ENCODE measurements at regions of chr2 and their contacts with region 1.

Region 1: DNA sequence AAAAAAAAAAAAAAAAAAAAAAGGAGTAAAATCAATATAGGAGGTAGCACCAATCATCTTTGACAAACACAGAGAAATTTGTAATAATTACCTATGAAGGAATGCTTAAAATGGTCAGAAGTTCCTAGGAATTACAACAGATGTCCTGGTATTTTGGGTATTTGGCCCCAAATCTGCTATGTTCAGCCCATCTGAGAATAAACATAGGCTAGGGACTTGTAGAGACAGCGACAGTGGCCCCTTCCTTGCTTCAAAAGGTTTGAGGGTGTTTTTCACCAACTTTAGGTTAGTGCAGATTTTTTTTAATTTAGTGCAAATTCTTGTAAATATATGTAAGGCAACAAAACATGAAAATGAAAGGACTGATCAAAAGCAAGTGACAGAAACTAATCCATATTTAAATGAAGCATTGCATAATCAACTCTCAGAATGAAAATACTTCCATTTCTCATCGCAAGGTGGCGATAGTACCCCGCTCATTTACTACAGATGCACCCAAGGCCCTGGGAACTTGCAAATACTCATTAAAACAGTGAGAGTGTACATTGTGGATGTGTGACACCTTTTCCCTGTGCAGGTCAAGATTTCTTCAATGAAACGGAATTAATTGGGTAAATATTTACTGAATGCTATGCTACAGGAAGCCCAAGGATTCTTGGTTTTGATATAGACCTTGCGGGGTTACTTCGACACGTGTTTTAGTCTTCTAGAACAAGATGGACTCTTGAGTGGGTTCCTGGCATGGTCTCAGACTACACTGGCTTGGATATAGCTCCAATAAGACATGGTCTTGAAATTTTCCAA is 44.6 kb downstream of the FAM124B start:
- DNase-seq: peak; percentile 79
- ATAC-seq: peak; percentile 81
- H3K4me3 ChIP-seq: no peak overlapping the region
- H3K4me3 Mint-ChIP-seq: no peak overlapping the region
- H3K27ac ChIP-seq: no peak overlapping the region
- H3K27ac Mint-ChIP-seq: no peak overlapping the region
- H3K4me1 ChIP-seq: no peaks in the 10 kb centered on the region
- H3K4me1 Mint-ChIP-seq: no peaks in the 10 kb centered on the region
- H3K27me3 ChIP-seq: no peaks in the 10 kb centered on the region
- H3K27me3 Mint-ChIP-seq: peaks cover 11% of the 10 kb centered on the region
- CTCF ChIP-seq: peak; percentile 87

Region 2: GRCh38 chr2:224195925-224196571 is 161.3 kb before region 1 on chr2:
- CTCF ChIA-PET with region 1: no interaction called
- POLR2A ChIA-PET with region 1: no interaction called
- intact Hi-C with region 1: no loop called
- DNase-seq: no peak
- ATAC-seq: no peak
- H3K4me3 ChIP-seq: no peak overlapping the region
- H3K4me3 Mint-ChIP-seq: no peak overlapping the region
- H3K27ac ChIP-seq: no peak overlapping the region
- H3K27ac Mint-ChIP-seq: no peak overlapping the region
- H3K4me1 ChIP-seq: no peaks in the 10 kb centered on the region
- H3K4me1 Mint-ChIP-seq: no peaks in the 10 kb centered on the region
- H3K27me3 ChIP-seq: peaks cover 0 to 2% (median 0%) of the 10 kb centered on the region in 4 experiments
- H3K27me3 Mint-ChIP-seq: peaks cover 10% of the 10 kb centered on the region
- CTCF ChIP-seq: no peak

Region 3: DNA sequence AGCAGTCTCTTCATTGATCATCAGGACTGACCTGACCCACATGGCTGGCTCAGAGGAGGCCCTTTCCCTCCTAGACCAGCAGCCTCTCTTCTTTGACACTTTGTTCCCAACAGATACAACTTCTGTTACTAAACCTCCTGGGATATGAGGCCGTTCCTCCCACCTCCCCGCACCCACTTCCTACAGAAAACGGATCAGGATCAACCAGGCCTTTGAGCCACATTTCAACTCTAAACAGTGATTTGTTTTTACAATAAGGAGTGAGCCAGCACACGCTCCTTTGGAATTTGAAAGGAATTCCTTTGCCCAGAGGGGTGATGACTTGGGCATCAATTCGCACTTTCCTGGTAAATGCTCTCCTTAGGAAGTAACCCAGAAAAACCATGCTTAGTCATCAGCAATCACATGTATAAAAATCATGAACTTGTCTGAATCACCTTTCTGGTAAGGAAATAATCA is 135.8 kb before region 1 on chr2:
- CTCF ChIA-PET with region 1: no interaction called
- POLR2A ChIA-PET with region 1: no interaction called
- intact Hi-C with region 1: no loop called
- DNase-seq: no peak
- ATAC-seq: no peak
- H3K4me3 ChIP-seq: no peak overlapping the region
- H3K4me3 Mint-ChIP-seq: no peak overlapping the region
- H3K27ac ChIP-seq: no peak overlapping the region
- H3K27ac Mint-ChIP-seq: no peak overlapping the region
- H3K4me1 ChIP-seq: no peaks in the 10 kb centered on the region
- H3K4me1 Mint-ChIP-seq: no peaks in the 10 kb centered on the region
- H3K27me3 ChIP-seq: peaks cover 0 to 2% (median 0%) of the 10 kb centered on the region in 4 experiments
- H3K27me3 Mint-ChIP-seq: peaks cover 26% of the 10 kb centered on the region
- CTCF ChIP-seq: no peak

Region 4: GRCh38 chr2:224369028-224369632 is 11.8 kb after region 1 on chr2:
- CTCF ChIA-PET with region 1: interaction called, 17 read pairs
- POLR2A ChIA-PET with region 1: no interaction called
- intact Hi-C with region 1: no loop called
- DNase-seq: peak; percentile 58
- ATAC-seq: no peak
- H3K4me3 ChIP-seq: no peak overlapping the region
- H3K4me3 Mint-ChIP-seq: no peak overlapping the region
- H3K27ac ChIP-seq: no peak overlapping the region
- H3K27ac Mint-ChIP-seq: no peak overlapping the region
- H3K4me1 ChIP-seq: no peaks in the 10 kb centered on the region
- H3K4me1 Mint-ChIP-seq: no peaks in the 10 kb centered on the region
- H3K27me3 ChIP-seq: no peaks in the 10 kb centered on the region
- H3K27me3 Mint-ChIP-seq: no peaks in the 10 kb centered on the region
- CTCF ChIP-seq: peak; percentile 81

Region 5: DNA sequence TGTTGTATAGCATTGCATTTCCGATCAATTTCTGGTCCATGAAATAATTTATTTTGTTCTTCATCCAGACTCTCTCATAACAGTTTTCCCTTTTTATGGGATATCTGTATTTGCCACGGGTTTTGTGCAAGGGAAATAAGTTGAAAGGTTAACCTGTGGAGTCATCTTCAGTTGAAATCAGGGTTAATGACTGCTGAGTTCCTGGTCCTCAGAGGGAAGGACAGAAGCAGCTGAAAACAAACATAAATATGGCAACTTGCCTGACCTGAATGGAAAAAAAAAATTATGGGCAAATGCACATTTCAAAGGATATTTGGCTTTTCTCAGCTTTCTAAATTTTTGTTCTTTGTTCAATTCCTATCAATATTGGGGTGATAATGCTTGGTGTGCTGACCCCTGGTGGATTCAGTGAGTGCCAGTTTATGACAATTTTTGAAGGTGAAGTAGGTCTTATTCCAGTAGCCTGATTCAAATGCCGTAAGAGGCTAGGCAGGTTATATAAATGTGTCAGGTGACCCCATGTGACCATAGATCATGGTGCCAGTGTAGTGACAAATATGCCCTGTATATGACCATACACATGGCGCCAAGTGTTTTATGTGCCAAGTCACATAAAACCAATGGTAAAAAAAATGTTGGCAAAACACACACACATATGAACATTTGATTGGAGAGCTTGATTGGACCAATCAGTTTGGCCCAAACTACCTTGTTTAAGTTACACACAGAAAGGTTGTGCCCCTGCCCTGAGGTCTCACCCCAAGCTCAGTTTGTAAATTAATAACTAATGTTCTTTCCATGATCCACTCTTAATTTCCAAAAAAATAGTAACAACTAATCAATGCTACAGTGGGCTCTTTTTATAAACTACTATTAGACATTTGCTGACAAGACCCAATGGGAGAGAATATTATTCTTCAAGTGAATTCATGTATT is 92.2 kb after region 1 on chr2:
- CTCF ChIA-PET with region 1: interaction called, 3 read pairs
- POLR2A ChIA-PET with region 1: no interaction called
- intact Hi-C with region 1: loop called (anchors 2 kb)
- DNase-seq: peak; percentile 54
- ATAC-seq: peak; percentile 47
- H3K4me3 ChIP-seq: no peak overlapping the region
- H3K4me3 Mint-ChIP-seq: no peak overlapping the region
- H3K27ac ChIP-seq: no peak overlapping the region
- H3K27ac Mint-ChIP-seq: no peak overlapping the region
- H3K4me1 ChIP-seq: no peaks in the 10 kb centered on the region
- H3K4me1 Mint-ChIP-seq: no peaks in the 10 kb centered on the region
- H3K27me3 ChIP-seq: peaks cover 0 to 3% (median 0%) of the 10 kb centered on the region in 4 experiments
- H3K27me3 Mint-ChIP-seq: no peaks in the 10 kb centered on the region
- CTCF ChIP-seq: peak; percentile 76

Region 6: DNA sequence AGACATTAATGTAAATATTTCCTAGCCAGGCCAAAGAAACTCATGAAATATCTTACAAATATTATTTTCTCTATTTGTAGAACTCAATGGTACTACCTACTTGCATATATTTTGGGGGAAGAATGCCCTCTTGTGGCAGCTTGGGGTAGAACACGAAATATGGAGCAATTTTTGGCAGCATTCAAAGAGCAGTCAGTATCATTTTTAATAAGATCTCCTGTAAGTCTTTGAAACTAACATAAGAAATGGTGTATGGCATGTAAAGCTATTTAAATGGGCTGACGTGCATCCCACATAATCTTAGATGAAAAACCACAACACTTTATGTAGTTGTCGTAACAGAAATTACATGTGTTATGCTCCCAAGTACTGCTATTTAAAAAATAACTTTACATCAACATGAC is 421.2 kb after region 1 on chr2:
- CTCF ChIA-PET with region 1: interaction called, 28 read pairs
- POLR2A ChIA-PET with region 1: no interaction called
- intact Hi-C with region 1: loop called (anchors 1 kb)
- DNase-seq: peak; percentile 72
- ATAC-seq: no peak
- H3K4me3 ChIP-seq: no peak overlapping the region
- H3K4me3 Mint-ChIP-seq: no peak overlapping the region
- H3K27ac ChIP-seq: no peak overlapping the region
- H3K27ac Mint-ChIP-seq: no peak overlapping the region
- H3K4me1 ChIP-seq: no peaks in the 10 kb centered on the region
- H3K4me1 Mint-ChIP-seq: no peaks in the 10 kb centered on the region
- H3K27me3 ChIP-seq: no peaks in the 10 kb centered on the region
- H3K27me3 Mint-ChIP-seq: no peaks in the 10 kb centered on the region
- CTCF ChIP-seq: peak; percentile 97

Measured in B cell (primary cell).